ENCODE measurements at regions of chr4 and their contacts with region 1.

Region 1: GRCh38 chr4:6709230-6710114 is at the start of gene MRFAP1L1:
- DNase-seq: peak; percentile 95
- H3K4me3 Mint-ChIP-seq: peak within 1 kb of the TSS; percentile 98
- H3K27ac Mint-ChIP-seq: peak within 1 kb of the TSS; percentile 95
- H3K4me1 Mint-ChIP-seq: peaks cover 62% of the 10 kb centered on the region
- H3K27me3 Mint-ChIP-seq: peaks cover 3% of the 10 kb centered on the region
- total RNA-seq, gene MRFAP1L1: 51.7 and 53.9 TPM in 2 replicates

Region 2: GRCh38 chr4:6192245-6192644 is 517.2 kb before region 1 on chr4:
- intact Hi-C with region 1: no loop called
- DNase-seq: no peak
- H3K4me3 Mint-ChIP-seq: no peak overlapping the region
- H3K27ac Mint-ChIP-seq: no peak overlapping the region
- H3K4me1 Mint-ChIP-seq: peaks cover 76% of the 10 kb centered on the region
- H3K27me3 Mint-ChIP-seq: no peaks in the 10 kb centered on the region

Region 3: GRCh38 chr4:6574747-6575502 is 134.5 kb before region 1 on chr4 and contains the start of gene MAN2B2:
- intact Hi-C with region 1: loop called (anchors 2 kb)
- DNase-seq: peak; percentile 83
- H3K4me3 Mint-ChIP-seq: peak within 1 kb of the TSS; percentile 87
- H3K27ac Mint-ChIP-seq: peak within 1 kb of the TSS; percentile 71
- H3K4me1 Mint-ChIP-seq: no peaks in the 10 kb centered on the region
- H3K27me3 Mint-ChIP-seq: peaks cover 5% of the 10 kb centered on the region
- total RNA-seq, gene MAN2B2: 13.9 and 14.0 TPM in 2 replicates

Region 4: GRCh38 chr4:6655924-6656323 is 53.5 kb before region 1 on chr4:
- intact Hi-C with region 1: no loop called
- DNase-seq: no peak
- H3K4me3 Mint-ChIP-seq: no peak overlapping the region
- H3K27ac Mint-ChIP-seq: no peak overlapping the region
- H3K4me1 Mint-ChIP-seq: peaks cover 8% of the 10 kb centered on the region
- H3K27me3 Mint-ChIP-seq: peaks cover 11% of the 10 kb centered on the region

Region 5: DNA sequence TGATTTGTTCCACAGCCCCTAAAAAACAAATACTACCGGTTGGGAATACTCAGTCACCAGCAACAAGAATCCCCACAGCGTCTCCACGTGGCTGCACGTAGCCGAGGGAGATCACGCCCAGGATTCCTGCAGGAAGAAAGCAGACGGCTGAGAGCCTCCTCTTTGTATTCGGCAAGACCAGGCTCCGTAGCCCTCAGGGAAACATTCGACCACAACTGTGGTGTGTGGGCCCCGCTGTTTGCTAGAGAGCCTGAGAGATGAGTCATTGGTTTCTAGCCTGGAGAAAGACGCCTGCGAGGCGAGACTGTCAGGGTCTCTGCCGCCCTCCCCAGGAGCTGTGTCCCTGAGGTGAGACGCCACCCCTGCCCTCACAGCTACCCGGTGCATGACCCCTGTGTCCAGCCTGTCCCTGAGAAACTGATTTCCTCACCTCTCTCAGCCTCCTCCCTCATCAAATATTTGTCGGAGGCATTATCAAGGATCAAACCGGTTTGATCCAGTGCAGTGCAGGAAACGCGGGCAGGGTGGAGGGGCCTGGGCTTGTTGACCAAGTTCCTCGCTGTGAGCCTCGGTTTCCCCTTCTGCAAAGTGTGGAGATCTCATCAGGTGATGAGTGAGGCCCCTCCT is 20.5 kb before region 1 on chr4:
- intact Hi-C with region 1: loop called (anchors 1 kb)
- DNase-seq: peak; percentile 70
- H3K4me3 Mint-ChIP-seq: peak overlapping the region; percentile 83
- H3K27ac Mint-ChIP-seq: peak overlapping the region; percentile 96
- H3K4me1 Mint-ChIP-seq: peaks cover 80% of the 10 kb centered on the region
- H3K27me3 Mint-ChIP-seq: no peaks in the 10 kb centered on the region

Region 6: GRCh38 chr4:6695660-6696630 is 13.5 kb before region 1 on chr4:
- intact Hi-C with region 1: loop called (anchors 1 kb)
- DNase-seq: peak; percentile 67
- H3K4me3 Mint-ChIP-seq: peak overlapping the region; percentile 79
- H3K27ac Mint-ChIP-seq: peak overlapping the region; percentile 100
- H3K4me1 Mint-ChIP-seq: peaks cover 69% of the 10 kb centered on the region
- H3K27me3 Mint-ChIP-seq: no peaks in the 10 kb centered on the region

Measured in activated T-helper 1 cell treated with anti-CD3 and anti-CD28 coated beads, Interleukin-12 subunit alpha, Interleukin-12 subunit beta, Interleukin-2, Interleukin-4 antibody, amounts not matched to agents 30 ng/mL and 10 ng/mL and 1 ng/mL, durations not matched to agents 14 hours and 24 hours and 36 hours (primary cell).